CD8-positive, alpha-beta T cell (primary cell): ENCODE measurements at regions of chr12 and their contacts with region 1.

Region 1: GRCh38 chr12:69359531-69360347 is at the start of gene YEATS4:
- DNase-seq: peak; percentile 68 to 96 (median 83)
- ATAC-seq: peak; percentile 80
- H3K4me3 ChIP-seq: peak within 1 kb of the TSS; percentile 64 to 91
- H3K4me3 Mint-ChIP-seq: peak within 1 kb of the TSS; percentile 90
- H3K27ac ChIP-seq: peak within 1 kb of the TSS; percentile 72 to 95
- H3K27ac Mint-ChIP-seq: peak within 1 kb of the TSS; percentile 95
- H3K4me1 ChIP-seq: peaks cover 15% of the 10 kb centered on the region
- H3K4me1 Mint-ChIP-seq: peaks cover 29% of the 10 kb centered on the region
- H3K27me3 ChIP-seq: no peaks in the 10 kb centered on the region
- H3K27me3 Mint-ChIP-seq: peaks cover 6% of the 10 kb centered on the region
- CTCF ChIP-seq: no peak
- total RNA-seq, gene YEATS4: 24.5 to 27.5 TPM

Region 2: DNA sequence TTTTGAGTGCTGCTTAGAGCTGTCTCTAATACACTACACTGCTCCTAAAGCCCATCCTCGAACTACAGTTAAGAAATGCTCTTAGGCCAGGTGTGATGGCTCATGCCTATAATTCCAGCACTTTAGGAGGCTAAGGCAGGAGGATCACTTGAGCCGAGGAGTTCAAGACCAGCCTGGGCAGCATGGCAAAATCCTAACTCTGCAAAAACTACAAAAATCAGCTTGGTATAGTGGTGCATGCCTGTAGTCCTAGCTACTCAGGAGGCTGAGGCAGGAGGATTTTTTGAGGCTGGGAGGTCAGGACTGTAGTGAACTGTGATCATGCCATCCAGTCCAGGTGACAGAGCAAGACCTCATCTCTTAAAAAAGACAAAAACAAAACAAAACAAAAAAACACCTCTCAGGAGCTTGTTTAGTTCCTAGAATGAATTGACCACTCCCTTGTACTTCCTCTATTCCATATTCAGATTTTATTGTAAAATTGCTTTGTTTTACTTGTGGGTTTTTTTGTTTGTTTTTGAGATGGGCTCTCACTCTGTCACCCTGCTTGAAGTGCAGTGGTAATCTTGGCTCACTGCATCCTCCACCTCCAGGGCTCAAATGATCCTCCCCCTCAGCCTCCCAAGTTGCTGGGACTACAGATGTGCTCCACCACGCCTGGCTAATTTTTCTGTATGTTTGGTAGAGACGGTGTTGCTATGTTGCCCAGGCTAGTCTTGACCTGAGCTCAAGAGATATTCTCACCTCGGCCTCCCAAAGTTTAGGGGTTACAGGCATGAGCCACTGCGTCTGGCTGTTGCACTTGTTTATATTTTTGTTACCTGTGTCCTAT is 538.2 kb before region 1 on chr12:
- CTCF ChIA-PET with region 1: no interaction called
- POLR2A ChIA-PET with region 1: no interaction called
- intact Hi-C with region 1: loop called in 1 of 2 experiments (anchors 10 kb)
- DNase-seq: no peak
- ATAC-seq: no peak
- H3K4me3 ChIP-seq: no peak overlapping the region
- H3K4me3 Mint-ChIP-seq: no peak overlapping the region
- H3K27ac ChIP-seq: peak overlapping the region in 1 of 2 experiments; percentile 16
- H3K27ac Mint-ChIP-seq: peak overlapping the region; percentile 74
- H3K4me1 ChIP-seq: no peaks in the 10 kb centered on the region
- H3K4me1 Mint-ChIP-seq: peaks cover 25% of the 10 kb centered on the region
- H3K27me3 ChIP-seq: no peaks in the 10 kb centered on the region
- H3K27me3 Mint-ChIP-seq: no peaks in the 10 kb centered on the region
- CTCF ChIP-seq: no peak

Region 3: DNA sequence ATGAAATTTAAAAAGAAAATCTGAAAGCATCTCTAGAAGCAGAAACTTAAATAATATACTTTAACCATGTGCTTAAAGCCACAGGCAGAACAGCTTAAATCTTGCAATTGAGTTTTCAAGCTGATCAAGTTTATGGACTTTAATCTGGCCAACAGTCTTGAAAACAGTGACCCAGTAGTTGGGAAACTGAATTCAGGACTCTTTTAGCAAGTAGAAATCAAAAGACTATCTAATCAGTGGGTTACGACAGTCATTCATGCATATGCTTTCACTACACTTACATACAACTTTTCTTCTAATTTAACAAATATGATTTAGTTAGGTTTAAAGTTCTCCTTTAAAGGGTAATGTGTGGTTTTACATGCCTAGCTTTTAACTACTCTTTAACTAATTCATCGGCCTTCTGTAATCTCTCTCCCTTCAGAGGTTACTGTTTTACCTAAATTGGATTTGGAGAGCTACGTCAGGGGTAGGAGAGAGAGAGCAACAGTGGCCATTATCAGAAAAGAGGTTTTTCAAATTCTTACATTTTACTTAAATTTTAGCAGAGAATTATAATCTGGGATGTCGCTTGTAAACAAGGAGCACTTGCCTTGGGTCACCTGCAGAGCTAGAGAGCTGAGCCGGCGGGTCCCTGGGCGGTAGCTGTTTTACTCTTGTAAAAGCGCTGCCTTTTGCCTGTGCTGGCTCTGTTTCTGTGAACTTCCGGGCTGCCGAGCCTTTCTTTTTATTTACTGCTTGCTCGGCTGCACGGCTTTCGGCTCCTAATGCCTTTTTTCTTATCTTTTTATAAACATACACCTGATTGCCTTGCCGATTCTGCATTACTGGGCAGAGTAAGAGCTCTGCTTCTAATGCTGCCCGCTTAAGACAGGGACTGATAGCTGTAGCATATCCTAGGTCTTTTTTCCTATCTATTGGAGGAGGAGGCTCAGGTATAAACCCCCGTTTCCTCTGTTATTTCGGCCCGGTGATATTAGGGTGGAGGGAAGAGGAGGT is 29.0 kb before region 1 on chr12:
- CTCF ChIA-PET with region 1: interaction called, 59 read pairs
- POLR2A ChIA-PET with region 1: interaction called, 15 read pairs
- intact Hi-C with region 1: loop called in 1 of 2 experiments (anchors 1 kb)
- DNase-seq: peak; percentile 48 to 85 (median 65)
- ATAC-seq: peak; percentile 67
- H3K4me3 ChIP-seq: peak overlapping the region; percentile 53 to 61
- H3K4me3 Mint-ChIP-seq: peak overlapping the region; percentile 93
- H3K27ac ChIP-seq: peak overlapping the region; percentile 80 to 86
- H3K27ac Mint-ChIP-seq: peak overlapping the region; percentile 99
- H3K4me1 ChIP-seq: peaks cover 51% of the 10 kb centered on the region
- H3K4me1 Mint-ChIP-seq: peaks cover 56% of the 10 kb centered on the region
- H3K27me3 ChIP-seq: no peaks in the 10 kb centered on the region
- H3K27me3 Mint-ChIP-seq: no peaks in the 10 kb centered on the region
- CTCF ChIP-seq: no peak

Region 4: DNA sequence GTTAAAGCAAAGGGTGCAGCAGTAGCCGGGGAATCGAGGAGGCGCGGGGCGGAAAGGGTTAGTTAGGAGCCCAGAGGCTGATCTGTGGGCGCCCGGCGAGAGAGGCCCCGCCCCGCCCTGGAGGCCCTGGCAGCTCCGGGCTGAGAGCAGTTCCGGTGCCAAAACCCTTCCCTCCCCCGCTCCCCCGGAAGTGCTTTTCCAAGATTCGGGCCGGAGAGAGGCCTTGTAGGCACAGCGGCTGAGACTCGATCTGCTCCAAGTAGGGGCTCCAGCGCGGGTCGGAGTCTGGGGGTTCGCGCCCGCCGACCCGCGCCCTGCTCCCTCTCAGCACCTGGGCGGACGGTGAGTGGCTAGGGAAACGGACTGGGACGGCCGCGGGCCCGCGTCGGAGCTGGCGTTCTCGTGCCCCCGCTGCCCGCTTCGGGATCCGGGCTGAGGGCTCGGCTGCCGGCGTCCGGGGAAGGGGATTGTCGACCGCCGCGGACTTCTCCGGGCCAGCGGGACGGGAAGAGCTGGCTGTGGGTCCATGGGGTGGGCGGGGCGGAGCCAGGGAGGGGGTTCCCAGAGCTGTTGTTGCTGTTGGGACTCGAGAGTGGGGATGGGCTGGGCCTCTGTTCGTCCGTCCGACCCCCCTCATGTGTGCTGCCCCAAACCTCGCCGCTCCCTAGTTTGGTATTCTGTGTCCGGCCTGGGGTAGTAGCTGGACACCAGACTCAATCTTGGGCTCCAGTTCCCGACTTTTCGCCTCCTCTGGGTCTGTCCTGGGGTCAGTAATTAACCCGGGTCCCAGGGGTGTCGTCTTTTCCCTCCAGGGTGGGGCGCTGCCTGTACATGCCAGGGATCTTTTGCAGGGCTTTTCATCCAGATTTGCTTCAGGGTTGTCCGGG is 110.7 kb after region 1 on chr12 and contains the start of gene FRS2:
- CTCF ChIA-PET with region 1: interaction called, 3 read pairs
- POLR2A ChIA-PET with region 1: no interaction called
- intact Hi-C with region 1: loop called (anchors 1 kb)
- DNase-seq: peak; percentile 66 to 91 (median 84)
- ATAC-seq: peak; percentile 97
- H3K4me3 ChIP-seq: peak within 1 kb of the TSS; percentile 86 to 88
- H3K4me3 Mint-ChIP-seq: peak within 1 kb of the TSS; percentile 98
- H3K27ac ChIP-seq: peak within 1 kb of the TSS; percentile 76 to 82
- H3K27ac Mint-ChIP-seq: peak within 1 kb of the TSS; percentile 97
- H3K4me1 ChIP-seq: peaks cover 30% of the 10 kb centered on the region
- H3K4me1 Mint-ChIP-seq: peaks cover 46% of the 10 kb centered on the region
- H3K27me3 ChIP-seq: no peaks in the 10 kb centered on the region
- H3K27me3 Mint-ChIP-seq: no peaks in the 10 kb centered on the region
- CTCF ChIP-seq: no peak
- total RNA-seq, gene FRS2: 31.1 to 32.4 TPM

Region 5: GRCh38 chr12:69585189-69586062 is 225.7 kb after region 1 on chr12 and contains the start of gene CCT2:
- CTCF ChIA-PET with region 1: interaction called, 7 read pairs
- POLR2A ChIA-PET with region 1: no interaction called
- intact Hi-C with region 1: loop called (anchors 1 kb)
- DNase-seq: peak; percentile 92 to 98 (median 97)
- ATAC-seq: peak; percentile 88
- H3K4me3 ChIP-seq: peak within 1 kb of the TSS; percentile 88 to 98
- H3K4me3 Mint-ChIP-seq: peak within 1 kb of the TSS; percentile 96
- H3K27ac ChIP-seq: peak within 1 kb of the TSS; percentile 94 to 99
- H3K27ac Mint-ChIP-seq: peak within 1 kb of the TSS; percentile 96
- H3K4me1 ChIP-seq: peaks cover 11% of the 10 kb centered on the region
- H3K4me1 Mint-ChIP-seq: peaks cover 26% of the 10 kb centered on the region
- H3K27me3 ChIP-seq: no peaks in the 10 kb centered on the region
- H3K27me3 Mint-ChIP-seq: no peaks in the 10 kb centered on the region
- CTCF ChIP-seq: peak; percentile 22
- total RNA-seq, gene CCT2: 211 to 220 TPM

Region 6: GRCh38 chr12:69738351-69739286 is 378.9 kb after region 1 on chr12 and contains the start of gene RAB3IP:
- CTCF ChIA-PET with region 1: interaction called, 3 read pairs
- POLR2A ChIA-PET with region 1: no interaction called
- intact Hi-C with region 1: loop called (anchors 2 kb)
- DNase-seq: peak; percentile 84 to 95 (median 93)
- ATAC-seq: peak; percentile 87
- H3K4me3 ChIP-seq: peak within 1 kb of the TSS; percentile 64 to 79
- H3K4me3 Mint-ChIP-seq: peak within 1 kb of the TSS; percentile 82
- H3K27ac ChIP-seq: peak within 1 kb of the TSS; percentile 73
- H3K27ac Mint-ChIP-seq: peak within 1 kb of the TSS; percentile 69
- H3K4me1 ChIP-seq: peaks cover 11% of the 10 kb centered on the region
- H3K4me1 Mint-ChIP-seq: peaks cover 24% of the 10 kb centered on the region
- H3K27me3 ChIP-seq: no peaks in the 10 kb centered on the region
- H3K27me3 Mint-ChIP-seq: peaks cover 4% of the 10 kb centered on the region
- CTCF ChIP-seq: peak; percentile 89
- total RNA-seq, gene RAB3IP: 14.8 to 15.1 TPM

Region 7: DNA sequence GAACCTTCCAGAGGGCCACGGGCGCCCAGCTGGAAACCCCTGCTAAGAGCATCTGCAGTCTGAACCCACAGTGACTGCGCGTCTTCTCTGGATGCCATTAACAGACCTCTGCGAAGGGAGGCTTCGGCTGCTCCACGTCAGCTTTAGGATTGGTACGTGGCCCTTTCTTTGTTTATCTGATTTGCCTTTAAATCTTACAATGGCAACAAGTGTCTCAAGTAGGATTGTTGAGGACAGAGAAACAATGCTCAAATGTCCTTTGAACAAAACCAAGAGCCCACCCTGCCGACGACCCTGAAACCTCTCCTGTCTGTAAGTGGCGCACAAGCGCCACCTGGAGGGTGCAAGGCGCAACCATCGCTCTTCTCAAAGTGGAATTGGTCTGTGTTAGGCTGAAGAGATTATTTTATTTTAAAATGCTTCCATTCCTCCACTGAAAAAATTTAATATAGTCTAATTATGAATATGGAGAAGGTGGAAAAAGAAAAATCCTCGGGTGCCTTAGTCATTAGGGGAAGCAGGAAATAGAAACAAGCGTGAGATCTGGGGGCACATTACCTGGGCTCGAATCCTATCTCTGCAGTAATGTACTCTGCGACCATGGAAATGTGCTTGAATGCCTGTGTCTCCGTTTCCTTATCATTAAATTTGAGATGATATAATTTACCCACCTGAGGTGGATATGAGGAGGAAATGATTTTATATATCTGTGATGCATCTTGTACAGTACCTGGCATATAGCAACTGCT is 1360.1 kb after region 1 on chr12:
- CTCF ChIA-PET with region 1: no interaction called
- POLR2A ChIA-PET with region 1: no interaction called
- intact Hi-C with region 1: loop called in 1 of 2 experiments (anchors 5 kb)
- DNase-seq: peak in 7 of 9 experiments; percentile 2 to 53 (median 29)
- ATAC-seq: peak; percentile 48
- H3K4me3 ChIP-seq: no peak overlapping the region
- H3K4me3 Mint-ChIP-seq: peak overlapping the region; percentile 51
- H3K27ac ChIP-seq: no peak overlapping the region
- H3K27ac Mint-ChIP-seq: no peak overlapping the region
- H3K4me1 ChIP-seq: peaks cover 4% of the 10 kb centered on the region
- H3K4me1 Mint-ChIP-seq: peaks cover 9% of the 10 kb centered on the region
- H3K27me3 ChIP-seq: no peaks in the 10 kb centered on the region
- H3K27me3 Mint-ChIP-seq: peaks cover 12% of the 10 kb centered on the region
- CTCF ChIP-seq: peak; percentile 74